GM12878 (cell line): ENCODE measurements at regions of chr6 and their contacts with region 1.

Region 1: GRCh38 chr6:129774697-129775447 is 64.9 kb upstream of the ARHGAP18 start:
- DNase-seq: no peak
- ATAC-seq: peak; percentile 72
- H3K4me3 ChIP-seq: no peak overlapping the region
- H3K27ac ChIP-seq: no peak overlapping the region
- H3K4me1 ChIP-seq: no peaks in the 10 kb centered on the region
- H3K27me3 ChIP-seq: no peaks in the 10 kb centered on the region
- CTCF ChIP-seq: peak; percentile 70 to 88 (median 80)
- EP300 ChIP-seq: no peak
- POLR2A ChIP-seq: no peak
- RAD21 ChIP-seq: peak; percentile 63

Region 2: DNA sequence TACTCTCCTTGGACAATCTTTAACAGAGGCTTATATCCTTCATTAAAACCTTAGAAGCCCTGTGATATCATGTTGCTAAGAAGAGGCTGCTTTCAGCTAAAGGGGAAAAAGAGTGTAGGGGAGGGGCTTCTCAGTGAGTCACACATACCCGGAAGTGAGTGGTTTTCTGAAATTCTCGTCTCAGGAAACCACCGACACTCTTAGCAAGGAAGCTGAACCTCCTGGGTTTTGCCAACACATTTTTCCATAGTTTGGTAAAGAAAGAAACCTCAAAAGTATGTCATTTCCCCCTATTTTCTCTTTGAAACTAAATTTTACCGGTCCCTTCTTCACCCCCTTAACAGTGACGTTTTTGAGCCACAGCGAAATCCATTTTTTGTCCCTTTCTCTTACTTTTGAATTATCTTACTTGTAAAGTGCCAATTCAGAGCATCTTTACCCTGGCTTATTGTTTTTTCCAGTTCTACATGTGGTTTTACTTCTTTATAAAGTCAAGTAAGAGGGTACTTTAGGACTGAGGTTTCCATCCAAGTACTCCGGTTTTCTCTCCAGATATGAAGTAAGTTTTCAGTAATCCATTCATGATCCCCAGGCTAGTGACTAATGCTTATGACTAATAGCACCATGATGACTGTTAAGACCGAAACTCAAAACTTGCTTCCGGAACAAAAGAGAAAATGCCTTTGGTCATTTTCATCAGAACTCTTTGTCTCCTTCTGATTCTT is 284.2 kb before region 1 on chr6:
- CTCF ChIA-PET with region 1: interaction called, 10 read pairs
- POLR2A ChIA-PET with region 1: no interaction called
- RAD21 ChIA-PET with region 1: interaction called, 4 read pairs
- SMC1A ChIA-PET with region 1: no interaction called
- in situ Hi-C with region 1: no loop called
- intact Hi-C with region 1: no loop called
- DNase-seq: peak; percentile 68
- ATAC-seq: peak; percentile 89
- H3K4me3 ChIP-seq: 0 out of 2 replicates have a peak overlapping the region, but pooled peaks have one; percentile 1
- H3K27ac ChIP-seq: peak overlapping the region; percentile 88
- H3K4me1 ChIP-seq: peaks cover 23% of the 10 kb centered on the region
- H3K27me3 ChIP-seq: no peaks in the 10 kb centered on the region
- CTCF ChIP-seq: no peak
- EP300 ChIP-seq: peak in 1 of 2 experiments; percentile 72; a peak in 1 of 4 replicates
- POLR2A ChIP-seq: no peak
- RAD21 ChIP-seq: no peak

Region 3: DNA sequence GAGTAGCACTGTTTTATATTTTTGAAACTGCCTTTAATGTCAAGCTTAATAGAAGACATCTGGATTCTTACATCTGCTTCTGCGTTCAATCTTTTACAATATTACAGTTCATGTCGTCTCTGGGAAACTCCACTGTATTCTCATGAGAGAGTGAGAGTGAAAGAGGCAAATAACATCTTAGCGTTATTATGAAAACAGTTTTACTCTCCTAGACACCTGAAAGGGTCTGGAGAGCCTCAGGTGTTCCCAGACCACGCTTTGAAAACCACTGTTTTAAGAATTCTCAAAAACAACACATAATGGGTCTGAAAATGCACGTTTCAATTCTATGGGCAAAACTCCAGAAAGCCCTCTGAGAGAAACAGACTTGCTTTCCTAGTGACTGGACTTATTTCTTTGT is 128.2 kb before region 1 on chr6:
- CTCF ChIA-PET with region 1: no interaction called
- POLR2A ChIA-PET with region 1: no interaction called
- RAD21 ChIA-PET with region 1: no interaction called
- SMC1A ChIA-PET with region 1: no interaction called
- in situ Hi-C with region 1: no loop called
- intact Hi-C with region 1: no loop called
- DNase-seq: peak; percentile 61
- ATAC-seq: peak; percentile 84
- H3K4me3 ChIP-seq: no peak overlapping the region
- H3K27ac ChIP-seq: peak overlapping the region; percentile 65
- H3K4me1 ChIP-seq: peaks cover 42% of the 10 kb centered on the region
- H3K27me3 ChIP-seq: no peaks in the 10 kb centered on the region
- CTCF ChIP-seq: no peak
- EP300 ChIP-seq: peak in 1 of 2 experiments; percentile 77; a peak in 2 of 4 replicates
- POLR2A ChIP-seq: no peak
- RAD21 ChIP-seq: no peak

Region 4: DNA sequence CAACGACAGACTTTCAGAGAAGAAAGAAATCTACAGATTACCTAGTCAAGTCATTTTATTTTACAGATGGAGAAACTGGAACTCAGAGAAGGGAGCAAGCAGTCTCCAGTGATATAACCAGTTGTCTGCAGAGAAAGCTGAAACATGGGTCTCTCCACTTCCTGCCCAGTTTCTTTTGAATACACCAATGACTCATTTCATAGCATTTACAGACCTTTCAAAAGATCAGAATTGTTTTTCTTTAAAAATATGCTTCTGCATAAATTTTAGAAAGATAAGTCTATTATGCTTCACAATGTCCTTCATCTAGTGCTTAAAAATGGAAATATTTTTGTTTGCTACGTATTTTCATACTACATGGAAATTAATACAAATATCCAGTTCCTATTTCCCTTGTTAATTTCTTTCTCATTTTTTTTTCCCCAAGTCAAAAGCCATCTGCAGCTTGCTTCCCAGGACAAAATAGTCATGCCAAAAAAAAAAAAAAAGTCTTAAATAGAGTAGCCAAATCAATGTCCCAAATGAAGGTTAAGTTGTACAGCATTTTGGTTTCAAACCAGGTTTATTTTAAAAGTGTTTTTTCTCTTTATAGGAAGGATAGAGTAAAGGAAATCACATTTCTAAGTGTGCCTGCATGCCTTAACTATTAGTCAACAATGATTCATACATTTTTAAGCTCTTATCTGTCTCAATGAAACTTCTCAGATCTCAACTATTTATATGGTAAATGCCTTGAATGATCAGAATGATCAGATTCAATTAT is 101.8 kb before region 1 on chr6:
- CTCF ChIA-PET with region 1: no interaction called
- POLR2A ChIA-PET with region 1: no interaction called
- RAD21 ChIA-PET with region 1: no interaction called
- SMC1A ChIA-PET with region 1: no interaction called
- in situ Hi-C with region 1: no loop called
- intact Hi-C with region 1: no loop called
- DNase-seq: peak; percentile 60
- ATAC-seq: peak; percentile 82
- H3K4me3 ChIP-seq: peak overlapping the region; percentile 58; the same call in 1 of the 2 replicates
- H3K27ac ChIP-seq: peak overlapping the region; percentile 98
- H3K4me1 ChIP-seq: peaks cover 53% of the 10 kb centered on the region
- H3K27me3 ChIP-seq: no peaks in the 10 kb centered on the region
- CTCF ChIP-seq: no peak
- EP300 ChIP-seq: 0 out of 4 replicates have a peak, but pooled peaks of 1 of the 2 experiments have one; percentile 43
- POLR2A ChIP-seq: no peak
- RAD21 ChIP-seq: no peak

Region 5: GRCh38 chr6:129785047-129785755 is 10.3 kb after region 1 on chr6:
- CTCF ChIA-PET with region 1: interaction called, 17 read pairs
- POLR2A ChIA-PET with region 1: no interaction called
- RAD21 ChIA-PET with region 1: interaction called, 5 read pairs
- SMC1A ChIA-PET with region 1: interaction called, 6 read pairs
- in situ Hi-C with region 1: no loop called
- intact Hi-C with region 1: no loop called
- DNase-seq: no peak
- ATAC-seq: no peak
- H3K4me3 ChIP-seq: no peak overlapping the region
- H3K27ac ChIP-seq: no peak overlapping the region
- H3K4me1 ChIP-seq: no peaks in the 10 kb centered on the region
- H3K27me3 ChIP-seq: peaks cover 0 to 4% of the 10 kb centered on the region in 2 experiments; a peak in 2 of 4 replicates
- CTCF ChIP-seq: no peak
- EP300 ChIP-seq: no peak
- POLR2A ChIP-seq: no peak
- RAD21 ChIP-seq: no peak

Region 6: GRCh38 chr6:129790785-129791184 is 15.9 kb after region 1 on chr6:
- CTCF ChIA-PET with region 1: interaction called, 17 read pairs
- POLR2A ChIA-PET with region 1: no interaction called
- RAD21 ChIA-PET with region 1: interaction called, 5 read pairs
- SMC1A ChIA-PET with region 1: interaction called, 6 read pairs
- in situ Hi-C with region 1: no loop called
- intact Hi-C with region 1: no loop called
- DNase-seq: no peak
- ATAC-seq: no peak
- H3K4me3 ChIP-seq: no peak overlapping the region
- H3K27ac ChIP-seq: no peak overlapping the region
- H3K4me1 ChIP-seq: no peaks in the 10 kb centered on the region
- H3K27me3 ChIP-seq: no peaks in the 10 kb centered on the region; a peak in 1 of 4 replicates
- CTCF ChIP-seq: no peak
- EP300 ChIP-seq: no peak
- POLR2A ChIP-seq: no peak
- RAD21 ChIP-seq: no peak

Region 7: DNA sequence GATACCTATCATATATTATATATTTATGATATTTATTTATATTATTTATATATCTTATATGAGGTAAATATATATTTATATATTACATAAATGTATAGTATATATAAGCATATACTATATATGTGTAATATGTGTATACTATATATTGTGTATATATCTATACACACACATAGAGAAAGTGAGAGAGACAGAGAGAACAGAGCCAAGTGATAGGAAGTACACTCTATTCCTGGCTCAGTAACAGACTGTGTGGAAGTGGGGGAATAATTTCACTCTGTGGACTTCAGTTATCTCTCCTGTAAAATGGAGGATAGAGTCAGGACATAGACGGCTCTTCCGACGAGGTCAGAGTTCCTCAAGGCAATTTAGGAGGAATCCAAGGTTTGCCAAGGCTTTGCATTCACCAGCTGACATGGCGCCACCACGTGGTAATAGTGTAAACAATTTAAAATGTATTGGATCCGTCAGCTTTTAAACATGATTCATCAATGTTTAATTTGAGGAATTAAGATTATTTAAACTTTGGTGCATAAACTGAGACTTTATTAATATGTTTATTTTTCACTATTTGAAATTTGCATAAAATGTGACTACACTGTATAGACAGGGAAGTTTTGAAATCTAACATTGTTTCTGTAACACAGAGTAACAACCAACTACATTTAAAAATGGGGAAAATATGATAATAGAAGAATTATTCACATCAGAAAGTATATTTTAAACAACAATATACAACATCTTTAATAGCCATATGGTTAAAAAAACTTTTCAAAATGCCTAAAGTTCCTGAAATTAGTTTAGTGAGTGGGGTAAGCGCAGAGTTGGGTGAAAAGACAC is 161.7 kb after region 1 on chr6:
- CTCF ChIA-PET with region 1: interaction called, 7 read pairs
- POLR2A ChIA-PET with region 1: no interaction called
- RAD21 ChIA-PET with region 1: interaction called, 5 read pairs
- SMC1A ChIA-PET with region 1: interaction called, 10 read pairs
- in situ Hi-C with region 1: no loop called
- intact Hi-C with region 1: no loop called
- DNase-seq: peak; percentile 21
- ATAC-seq: peak; percentile 84
- H3K4me3 ChIP-seq: no peak overlapping the region
- H3K27ac ChIP-seq: no peak overlapping the region
- H3K4me1 ChIP-seq: no peaks in the 10 kb centered on the region
- H3K27me3 ChIP-seq: no peaks in the 10 kb centered on the region; a peak in 1 of 4 replicates
- CTCF ChIP-seq: peak; percentile 64 to 77 (median 66)
- EP300 ChIP-seq: no peak
- POLR2A ChIP-seq: no peak
- RAD21 ChIP-seq: peak; percentile 81

Region 8: GRCh38 chr6:130020907-130021629 is 246.2 kb after region 1 on chr6:
- CTCF ChIA-PET with region 1: interaction called, 6 read pairs
- POLR2A ChIA-PET with region 1: no interaction called
- RAD21 ChIA-PET with region 1: interaction called, 7 read pairs
- SMC1A ChIA-PET with region 1: interaction called, 4 read pairs
- in situ Hi-C with region 1: no loop called
- intact Hi-C with region 1: loop called (anchors 2 kb)
- DNase-seq: peak; percentile 72
- ATAC-seq: peak; percentile 82
- H3K4me3 ChIP-seq: peak overlapping the region; percentile 82
- H3K27ac ChIP-seq: no peak overlapping the region
- H3K4me1 ChIP-seq: no peaks in the 10 kb centered on the region
- H3K27me3 ChIP-seq: no peaks in the 10 kb centered on the region
- CTCF ChIP-seq: peak; percentile 80 to 94 (median 81); a peak in 5 of 6 replicates
- EP300 ChIP-seq: no peak
- POLR2A ChIP-seq: no peak
- RAD21 ChIP-seq: peak; percentile 94

Region 9: GRCh38 chr6:130240232-130240631 is 465.4 kb after region 1 on chr6:
- CTCF ChIA-PET with region 1: no interaction called
- POLR2A ChIA-PET with region 1: no interaction called
- RAD21 ChIA-PET with region 1: no interaction called
- SMC1A ChIA-PET with region 1: no interaction called
- in situ Hi-C with region 1: no loop called
- intact Hi-C with region 1: no loop called
- DNase-seq: no peak
- ATAC-seq: no peak
- H3K4me3 ChIP-seq: no peak overlapping the region
- H3K27ac ChIP-seq: no peak overlapping the region
- H3K4me1 ChIP-seq: no peaks in the 10 kb centered on the region
- H3K27me3 ChIP-seq: no peaks in the 10 kb centered on the region
- CTCF ChIP-seq: no peak
- EP300 ChIP-seq: no peak
- POLR2A ChIP-seq: no peak
- RAD21 ChIP-seq: no peak